ENCODE measurements at regions of chr12 and their contacts with region 1.

Region 1: DNA sequence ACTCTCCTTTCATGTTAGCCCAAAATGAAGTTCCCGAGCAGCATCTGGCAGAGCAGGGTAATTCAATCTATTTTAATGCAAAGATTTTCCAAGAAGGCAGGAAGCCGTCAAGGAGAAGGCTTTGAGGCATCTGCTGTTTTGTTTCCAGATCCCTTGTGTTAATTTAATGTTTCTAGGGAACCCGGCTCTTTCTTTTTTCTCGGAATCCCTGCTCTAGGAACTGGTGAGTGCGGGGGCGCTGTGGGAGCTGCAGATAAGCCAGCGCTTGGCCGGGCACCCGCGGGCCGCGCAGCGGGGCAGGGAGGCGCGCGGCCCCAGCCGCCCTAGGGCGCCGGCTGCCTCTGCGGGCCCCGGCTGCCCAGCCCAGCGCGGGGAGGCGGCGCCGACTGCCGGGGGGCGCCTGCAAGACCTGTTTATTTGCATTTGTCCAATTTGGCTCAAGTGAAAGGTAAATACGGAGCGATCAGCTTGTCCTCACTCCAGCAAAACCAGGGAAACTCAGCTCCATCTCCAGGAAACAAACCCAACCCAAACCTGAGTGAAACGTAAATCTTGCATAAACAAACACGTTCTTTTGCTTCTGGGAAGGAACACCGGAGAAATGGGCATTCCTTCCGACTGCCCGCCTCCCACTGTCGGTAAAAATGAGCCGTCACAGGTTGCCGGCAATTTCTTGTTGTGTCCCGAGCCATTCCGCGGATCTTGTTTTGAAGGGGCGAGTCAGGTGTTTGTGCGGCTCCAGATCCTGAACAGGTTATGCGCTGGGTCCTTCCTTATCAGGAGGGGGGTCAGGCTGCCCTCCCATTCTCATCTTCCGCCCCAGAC is 65.1 kb downstream of the CRADD start:
- DNase-seq: peak; percentile 82
- H3K4me3 ChIP-seq: peak overlapping the region; percentile 43 to 62 (median 57)
- H3K27ac ChIP-seq: peak overlapping the region; percentile 86 to 94 (median 90)
- H3K4me1 ChIP-seq: peaks cover 0 to 71% (median 50%) of the 10 kb centered on the region in 4 donors
- H3K27me3 ChIP-seq: no peaks in the 10 kb centered on the region
- CTCF ChIP-seq: peak in 2 of 4 experiments; percentile 19 to 32
- EP300 ChIP-seq: peak in 2 of 4 donors; percentile 69 to 75
- POLR2A ChIP-seq: no peak

Region 2: DNA sequence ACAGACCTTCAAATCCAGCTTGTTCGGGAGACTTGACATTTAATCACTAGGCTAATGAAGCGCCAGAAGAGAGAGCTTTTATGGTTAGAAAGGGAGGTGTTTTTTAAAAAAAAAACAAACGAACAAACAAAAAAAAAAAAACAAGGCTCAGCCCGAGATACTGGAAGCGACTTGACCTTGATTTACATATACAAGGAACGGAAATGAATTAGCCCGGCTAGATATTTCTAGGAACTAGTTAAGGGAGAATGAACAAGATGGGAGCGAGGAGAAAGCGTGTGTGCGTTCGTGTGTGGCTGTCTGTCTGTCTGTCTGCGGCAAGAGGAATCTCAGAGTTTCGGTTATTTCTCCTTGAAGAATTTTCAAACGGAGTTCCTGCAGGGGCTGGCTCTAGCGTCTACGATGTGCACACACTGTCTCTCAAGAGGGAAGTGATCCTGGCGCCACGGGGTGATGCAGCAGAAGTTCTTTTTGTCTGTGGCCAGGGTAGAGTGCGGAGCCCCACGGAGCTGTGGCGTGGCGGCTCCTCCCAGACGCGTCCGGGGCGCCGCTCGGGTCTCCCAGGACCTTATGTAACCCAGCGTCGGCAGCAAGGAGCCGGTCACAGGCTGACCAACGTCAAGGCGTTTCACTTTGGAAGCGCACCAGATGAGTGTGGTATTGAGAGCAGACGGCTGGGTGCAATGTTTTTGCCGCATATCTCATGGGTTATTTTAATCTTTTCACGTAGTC is 151.0 kb before region 1 on chr12:
- intact Hi-C with region 1: loop called (anchors 2 kb)
- DNase-seq: peak; percentile 94
- H3K4me3 ChIP-seq: peak overlapping the region; percentile 46 to 58 (median 54)
- H3K27ac ChIP-seq: peak overlapping the region; percentile 80 to 88 (median 84)
- H3K4me1 ChIP-seq: peaks cover 0 to 29% (median 12%) of the 10 kb centered on the region in 4 donors
- H3K27me3 ChIP-seq: no peaks in the 10 kb centered on the region
- CTCF ChIP-seq: no peak
- EP300 ChIP-seq: peak in 1 of 4 donors; percentile 52
- POLR2A ChIP-seq: peak; percentile 38 to 60

Region 3: DNA sequence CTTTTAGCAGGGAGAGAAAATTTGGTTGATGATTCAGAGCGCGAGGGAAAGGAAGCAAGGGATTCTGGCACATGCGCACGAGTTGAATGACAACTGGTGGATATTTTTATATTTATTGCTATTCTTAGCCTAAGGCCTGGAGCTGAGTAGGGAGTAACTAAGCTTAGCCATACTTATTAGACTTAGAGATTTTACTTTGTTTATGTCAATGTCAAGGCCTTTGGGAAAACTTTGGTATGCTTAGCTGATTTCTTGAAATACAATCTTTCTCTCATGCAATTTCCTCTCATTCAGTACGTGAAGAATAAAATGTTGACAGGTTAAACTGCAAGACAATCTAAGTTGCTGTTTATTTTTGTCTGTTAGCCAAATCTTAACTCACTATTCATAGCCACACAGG is 36.0 kb after region 1 on chr12:
- intact Hi-C with region 1: loop called (anchors 5 kb)
- DNase-seq: peak; percentile 87
- H3K4me3 ChIP-seq: no peak overlapping the region
- H3K27ac ChIP-seq: peak overlapping the region; percentile 79 to 89 (median 84)
- H3K4me1 ChIP-seq: peaks cover 0 to 76% (median 58%) of the 10 kb centered on the region in 4 donors
- H3K27me3 ChIP-seq: no peaks in the 10 kb centered on the region
- CTCF ChIP-seq: no peak
- EP300 ChIP-seq: peak in 1 of 4 donors; percentile 43
- POLR2A ChIP-seq: no peak

Region 4: GRCh38 chr12:93813972-93814821 is 71.9 kb after region 1 on chr12:
- intact Hi-C with region 1: loop called (anchors 5 kb)
- DNase-seq: peak; percentile 97
- H3K4me3 ChIP-seq: no peak overlapping the region
- H3K27ac ChIP-seq: peak overlapping the region; percentile 85 to 91 (median 90)
- H3K4me1 ChIP-seq: peaks cover 0 to 78% (median 67%) of the 10 kb centered on the region in 4 donors
- H3K27me3 ChIP-seq: no peaks in the 10 kb centered on the region
- CTCF ChIP-seq: no peak
- EP300 ChIP-seq: peak; percentile 71 to 95 (median 88)
- POLR2A ChIP-seq: no peak